ENCODE measurements at regions of chr6 and their contacts with region 1.

Region 1: DNA sequence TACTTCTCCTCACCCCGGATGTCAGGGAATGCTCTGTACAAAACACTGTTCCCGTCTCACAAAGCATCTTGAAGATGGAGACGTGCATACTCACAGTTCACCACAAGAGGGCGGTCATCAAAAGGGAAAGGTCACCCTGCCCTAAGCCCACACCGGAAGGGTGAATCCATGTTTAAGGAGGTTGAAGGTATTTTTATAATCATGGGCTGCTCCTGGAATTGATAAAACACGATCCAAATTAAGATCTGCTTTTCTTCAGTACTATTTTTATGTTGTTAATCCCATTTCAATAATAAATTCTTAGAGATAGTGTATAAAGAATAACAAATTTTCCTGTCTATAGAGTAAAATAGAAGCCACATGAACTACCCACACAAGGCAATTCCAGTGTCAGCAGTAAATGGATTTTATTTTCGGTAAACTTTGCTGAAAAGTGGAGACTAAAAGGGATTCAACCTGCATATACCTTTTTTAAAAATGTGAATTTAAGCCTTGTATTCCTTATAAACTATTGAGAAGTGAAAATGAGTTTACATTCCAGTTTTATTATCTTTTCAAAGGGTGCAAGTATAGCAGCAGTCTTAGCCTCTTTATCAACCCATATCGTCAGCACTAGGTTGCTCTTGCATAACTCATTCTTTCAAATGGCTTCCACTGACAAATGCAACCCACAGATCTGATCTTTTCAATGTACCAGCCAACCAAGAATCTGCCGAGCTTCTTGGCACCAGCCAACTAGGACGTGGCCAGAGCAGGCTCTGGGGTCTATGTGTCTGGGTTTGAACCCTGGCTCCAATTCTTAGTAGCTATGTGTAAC is 79.7 kb upstream of the MBOAT1 start:
- DNase-seq: peak; percentile 79
- H3K4me3 ChIP-seq: no peak overlapping the region
- H3K27ac ChIP-seq: no peak overlapping the region
- H3K4me1 ChIP-seq: no peaks in the 10 kb centered on the region
- H3K27me3 ChIP-seq: no peaks in the 10 kb centered on the region

Region 2: DNA sequence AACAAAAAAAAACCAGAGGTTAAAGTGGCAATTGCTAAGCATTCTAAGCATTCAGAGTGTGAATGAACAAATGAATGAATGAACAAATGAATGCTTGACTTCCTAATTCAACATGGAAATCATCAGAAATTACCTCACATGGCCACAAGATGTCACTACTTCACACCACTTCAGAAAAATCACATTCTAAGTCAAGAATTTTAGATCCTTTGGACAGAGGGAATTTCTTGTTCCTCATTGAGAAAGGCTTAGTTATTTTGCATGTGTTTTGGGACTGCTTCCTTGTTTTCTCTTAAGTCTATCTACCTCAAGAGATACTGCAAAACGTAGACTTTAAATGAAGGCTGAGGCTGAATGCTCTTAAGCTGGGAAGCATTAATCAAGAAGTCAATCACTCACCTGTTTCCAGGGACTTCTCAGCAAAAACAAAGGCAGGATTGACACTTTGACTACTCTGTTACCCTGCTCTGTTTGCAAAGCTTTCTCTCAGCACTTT is 199.9 kb before region 1 on chr6:
- in situ Hi-C with region 1: loop called (anchors 10 kb)
- DNase-seq: peak; percentile 52
- H3K4me3 ChIP-seq: no peak overlapping the region
- H3K27ac ChIP-seq: no peak overlapping the region
- H3K4me1 ChIP-seq: no peaks in the 10 kb centered on the region
- H3K27me3 ChIP-seq: no peaks in the 10 kb centered on the region

Measured in GM23248 (cell line).